GM12878 (cell line): ENCODE measurements at regions of chr14 and their contacts with region 1.

Region 1: DNA sequence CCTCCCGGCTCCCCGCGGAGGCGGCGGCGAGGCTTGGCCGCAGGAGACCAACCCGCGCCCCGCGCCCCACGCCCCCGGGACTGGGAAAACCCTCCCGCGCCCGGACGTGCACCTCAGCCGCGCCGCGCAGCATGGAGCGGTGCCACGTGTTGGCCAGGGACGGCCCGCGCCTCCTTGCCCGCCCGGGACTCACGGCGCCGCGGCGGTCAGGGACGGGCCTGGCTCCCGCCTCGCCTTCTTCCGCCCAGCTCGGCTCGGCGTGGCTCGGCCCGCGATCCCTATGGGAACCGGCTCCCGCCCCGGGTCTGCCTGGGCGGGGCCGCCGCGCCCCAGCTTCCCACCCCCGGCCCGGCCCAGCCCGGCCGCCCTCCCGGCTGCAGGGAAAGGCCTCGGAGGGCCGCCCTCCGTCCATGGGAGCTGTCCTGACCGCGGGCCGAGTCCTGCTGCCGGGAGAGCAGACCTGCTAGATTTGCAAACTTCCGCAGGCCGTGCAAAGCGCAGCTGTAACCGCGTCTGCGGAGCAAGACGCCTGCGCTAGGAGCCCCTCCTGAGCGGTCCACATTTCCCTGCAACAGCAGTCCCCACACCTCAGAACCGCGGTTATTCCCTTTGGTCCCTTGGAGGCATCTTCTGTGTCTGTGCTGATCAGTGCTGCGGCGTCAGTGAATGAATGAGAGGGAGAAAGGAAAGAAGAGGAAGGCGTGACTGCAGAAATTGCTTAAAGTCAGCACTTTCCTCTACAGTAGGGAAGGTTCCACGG is at the start of gene CDKL1:
- DNase-seq: no peak
- ATAC-seq: peak; percentile 83
- H3K4me3 ChIP-seq: peak within 1 kb of the TSS; percentile 66
- H3K27ac ChIP-seq: peak within 1 kb of the TSS; percentile 59
- H3K4me1 ChIP-seq: peaks cover 7% of the 10 kb centered on the region
- H3K27me3 ChIP-seq: no peaks in the 10 kb centered on the region
- CTCF ChIP-seq: no peak
- EP300 ChIP-seq: no peak
- POLR2A ChIP-seq: peak; percentile 80
- RAD21 ChIP-seq: no peak
- polyA plus RNA-seq, gene CDKL1: 10.0 to 17.2 TPM

Region 2: DNA sequence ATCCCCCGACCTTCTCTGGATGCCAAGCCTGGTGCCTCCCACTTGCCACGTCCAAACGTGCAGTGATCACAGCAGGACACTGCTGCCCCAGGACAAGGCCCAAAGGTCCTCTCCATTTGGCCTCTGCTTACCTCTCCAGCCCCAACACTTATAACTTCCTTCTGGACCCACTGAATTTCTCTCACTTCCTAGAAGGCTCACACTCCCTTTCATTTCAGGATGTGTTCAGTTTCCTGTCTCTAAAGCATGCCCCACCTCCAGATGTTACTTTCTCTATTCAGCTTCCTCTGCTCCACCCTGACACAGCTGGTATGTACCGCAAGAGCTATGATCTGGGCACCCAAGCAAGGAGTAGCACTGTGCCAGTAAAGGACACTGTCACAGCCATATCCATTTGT is 33.1 kb before region 1 on chr14:
- CTCF ChIA-PET with region 1: interaction called, 4 read pairs
- POLR2A ChIA-PET with region 1: interaction called, 4 read pairs
- RAD21 ChIA-PET with region 1: interaction called, 11 read pairs
- SMC1A ChIA-PET with region 1: interaction called, 17 read pairs
- in situ Hi-C with region 1: no loop called
- intact Hi-C with region 1: no loop called
- DNase-seq: peak; percentile 81
- ATAC-seq: peak; percentile 97
- H3K4me3 ChIP-seq: peak overlapping the region; percentile 80
- H3K27ac ChIP-seq: peak overlapping the region; percentile 94
- H3K4me1 ChIP-seq: peaks cover 11% of the 10 kb centered on the region
- H3K27me3 ChIP-seq: no peaks in the 10 kb centered on the region
- CTCF ChIP-seq: no peak
- EP300 ChIP-seq: no peak
- POLR2A ChIP-seq: peak; percentile 69
- RAD21 ChIP-seq: no peak

Region 3: DNA sequence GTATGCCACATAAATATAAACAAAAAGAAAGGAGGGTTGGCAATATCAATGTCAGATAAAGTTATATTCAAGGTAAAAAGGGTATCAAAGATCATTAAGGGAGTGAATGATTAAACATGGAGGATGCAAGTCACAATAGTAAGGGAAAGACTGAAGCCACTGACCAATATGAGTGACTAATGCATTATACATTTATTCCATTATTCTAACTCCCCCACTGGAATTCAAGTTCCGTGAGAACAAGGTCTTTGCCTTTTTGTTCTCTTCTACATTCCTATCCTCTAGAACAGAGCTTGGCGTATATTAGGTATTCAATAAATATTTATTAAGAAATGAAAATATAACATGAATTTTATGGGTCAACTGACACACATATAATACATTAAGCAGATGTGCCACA is 104.8 kb after region 1 on chr14:
- CTCF ChIA-PET with region 1: no interaction called
- POLR2A ChIA-PET with region 1: no interaction called
- RAD21 ChIA-PET with region 1: no interaction called
- SMC1A ChIA-PET with region 1: no interaction called
- in situ Hi-C with region 1: no loop called
- intact Hi-C with region 1: no loop called
- DNase-seq: no peak
- ATAC-seq: no peak
- H3K4me3 ChIP-seq: no peak overlapping the region
- H3K27ac ChIP-seq: no peak overlapping the region
- H3K4me1 ChIP-seq: no peaks in the 10 kb centered on the region
- H3K27me3 ChIP-seq: no peaks in the 10 kb centered on the region
- CTCF ChIP-seq: no peak
- EP300 ChIP-seq: no peak
- POLR2A ChIP-seq: no peak
- RAD21 ChIP-seq: no peak

Region 4: DNA sequence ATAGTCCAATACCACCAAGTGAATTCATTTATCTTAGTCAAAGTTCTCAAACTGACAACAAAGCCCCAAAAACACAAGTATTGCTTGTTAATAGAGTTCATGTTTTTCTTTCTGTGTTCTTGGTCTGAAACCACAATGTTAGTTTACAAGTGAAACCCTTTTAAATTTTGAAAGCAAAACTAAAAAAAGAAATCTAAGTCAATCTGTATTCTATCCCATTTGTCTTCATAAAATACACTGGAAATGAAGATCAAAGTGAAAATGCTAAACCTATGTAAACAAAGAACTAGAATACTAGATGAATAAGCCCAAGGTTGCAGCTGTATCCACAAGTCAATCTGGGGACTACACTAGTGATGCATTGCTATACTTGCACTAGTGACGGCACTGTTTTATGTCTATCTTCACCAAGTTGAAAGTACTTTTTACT is 125.1 kb after region 1 on chr14:
- CTCF ChIA-PET with region 1: no interaction called
- POLR2A ChIA-PET with region 1: no interaction called
- RAD21 ChIA-PET with region 1: no interaction called
- SMC1A ChIA-PET with region 1: interaction called, 3 read pairs
- in situ Hi-C with region 1: no loop called
- intact Hi-C with region 1: loop called (anchors 2 kb)
- DNase-seq: no peak
- ATAC-seq: peak; percentile 82
- H3K4me3 ChIP-seq: no peak overlapping the region
- H3K27ac ChIP-seq: peak overlapping the region; percentile 81; the same call in 1 of the 2 replicates
- H3K4me1 ChIP-seq: peaks cover 38% of the 10 kb centered on the region
- H3K27me3 ChIP-seq: no peaks in the 10 kb centered on the region
- CTCF ChIP-seq: no peak
- EP300 ChIP-seq: no peak
- POLR2A ChIP-seq: no peak
- RAD21 ChIP-seq: no peak